MCF 10A (cell line): ENCODE measurements at regions of chr1 and their contacts with region 1.

Region 1: DNA sequence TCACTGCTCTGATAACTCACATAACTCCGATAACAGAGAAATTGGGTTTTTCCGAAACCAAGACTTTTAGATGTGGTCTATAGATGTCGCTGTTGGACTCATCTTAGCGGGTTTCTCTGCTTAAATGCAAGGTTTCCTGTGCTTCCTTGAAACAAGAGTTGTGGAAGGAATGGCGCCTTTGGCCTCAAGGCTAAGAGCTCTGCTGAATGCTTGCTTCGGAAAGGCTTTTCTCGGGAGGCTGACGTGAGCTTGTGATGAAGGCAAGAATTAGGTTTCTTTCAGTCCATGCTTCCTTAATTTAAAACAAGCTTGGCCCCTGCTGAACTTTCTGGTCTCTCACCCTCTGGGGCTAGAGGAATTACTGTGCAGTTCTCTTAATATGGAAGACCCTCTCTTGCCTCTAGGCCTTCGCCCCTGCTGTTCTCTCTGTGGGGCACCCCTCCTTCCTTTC is 113.5 kb downstream of the MAP3K21 start:
- DNase-seq: peak; percentile 90
- H3K4me3 Mint-ChIP-seq: no peak overlapping the region
- H3K27ac Mint-ChIP-seq: no peak overlapping the region
- H3K4me1 Mint-ChIP-seq: peaks cover 18% of the 10 kb centered on the region
- H3K27me3 Mint-ChIP-seq: no peaks in the 10 kb centered on the region
- CTCF ChIP-seq: peak; percentile 99

Region 2: DNA sequence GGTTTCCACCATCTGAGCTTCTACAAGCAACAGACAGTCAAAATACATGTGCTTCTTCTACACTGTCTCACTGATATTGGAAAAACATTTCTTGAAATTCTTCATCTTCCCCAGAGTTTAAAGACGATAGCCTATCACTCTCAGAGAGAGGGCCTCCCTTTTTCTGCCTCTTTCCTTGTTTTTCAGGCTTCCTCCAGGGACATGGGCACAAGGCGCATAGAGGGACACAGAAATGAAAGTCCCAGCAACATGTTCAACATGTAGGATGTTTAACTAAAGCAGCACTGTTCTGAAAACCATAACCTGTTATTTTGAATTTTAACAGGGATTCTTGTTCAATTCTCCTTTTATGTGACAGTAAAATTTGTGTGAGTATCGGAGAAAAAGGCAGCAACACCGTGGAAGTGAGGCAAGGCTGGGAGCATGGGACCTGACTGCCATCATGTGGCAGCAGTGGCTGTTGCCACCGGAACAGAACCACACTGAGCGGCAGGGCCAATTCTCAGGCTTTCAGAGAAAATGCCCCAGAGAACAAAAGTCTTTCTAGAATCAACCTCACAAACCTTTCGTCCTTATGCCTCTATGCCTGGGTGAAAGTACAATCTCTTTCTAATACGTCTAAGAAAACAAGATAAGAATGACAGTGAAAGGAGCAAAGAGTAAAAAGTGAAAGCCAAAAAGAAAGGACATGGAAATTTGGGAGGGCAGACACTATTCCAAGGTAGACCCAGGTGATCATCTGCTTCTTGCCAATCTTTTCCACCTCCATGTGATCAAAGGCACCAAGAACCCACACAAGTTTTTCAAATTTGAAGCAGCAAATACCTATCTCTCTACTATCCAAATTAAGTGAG is 199.9 kb before region 1 on chr1:
- CTCF ChIA-PET with region 1: no interaction called
- POLR2A ChIA-PET with region 1: no interaction called
- intact Hi-C with region 1: no loop called
- DNase-seq: peak; percentile 56
- H3K4me3 Mint-ChIP-seq: no peak overlapping the region
- H3K27ac Mint-ChIP-seq: peak overlapping the region; percentile 32
- H3K4me1 Mint-ChIP-seq: peaks cover 9% of the 10 kb centered on the region
- H3K27me3 Mint-ChIP-seq: no peaks in the 10 kb centered on the region
- CTCF ChIP-seq: peak; percentile 90

Region 3: DNA sequence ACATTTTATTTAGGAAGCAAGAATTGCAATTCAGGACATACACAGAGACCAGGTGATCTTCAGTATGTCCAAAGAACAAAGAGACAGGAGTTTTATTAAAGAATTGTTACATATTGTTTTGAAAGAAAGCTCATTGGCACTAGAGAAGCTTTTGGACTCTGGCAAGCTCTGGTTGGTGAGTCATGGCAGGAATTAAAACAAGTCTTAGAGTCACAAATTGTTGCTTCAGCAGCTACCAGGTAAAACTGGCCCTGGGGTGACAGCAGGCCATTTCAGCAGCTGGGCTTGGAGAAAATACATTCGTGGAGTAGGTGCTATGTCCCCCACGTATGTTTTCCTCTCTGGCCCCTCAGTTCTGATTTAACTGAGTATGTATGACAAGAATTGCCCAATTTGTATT is 54.6 kb before region 1 on chr1:
- CTCF ChIA-PET with region 1: interaction called, 74 read pairs
- POLR2A ChIA-PET with region 1: no interaction called
- intact Hi-C with region 1: no loop called
- DNase-seq: peak; percentile 91
- H3K4me3 Mint-ChIP-seq: no peak overlapping the region
- H3K27ac Mint-ChIP-seq: no peak overlapping the region
- H3K4me1 Mint-ChIP-seq: peaks cover 6% of the 10 kb centered on the region
- H3K27me3 Mint-ChIP-seq: no peaks in the 10 kb centered on the region
- CTCF ChIP-seq: no peak

Region 4: DNA sequence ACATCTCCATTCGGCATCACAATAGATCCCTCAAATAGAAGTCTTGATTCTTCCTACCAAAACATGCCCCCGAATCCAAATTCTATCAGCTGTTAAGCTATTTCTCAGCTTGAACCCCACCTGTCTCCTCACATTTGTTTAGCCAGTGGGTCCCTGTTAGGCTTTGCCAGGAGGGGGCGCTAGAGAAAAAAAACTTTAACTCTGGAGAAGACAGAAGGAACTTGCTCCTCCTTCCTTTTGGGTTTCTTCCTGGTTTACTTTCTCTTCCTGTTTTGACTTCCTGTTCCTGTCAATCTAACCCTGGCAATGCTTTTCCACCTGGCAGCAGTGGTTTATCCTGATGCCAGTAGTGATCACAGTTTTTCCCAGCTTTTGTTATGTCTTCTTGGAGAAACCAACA is 77.4 kb after region 1 on chr1:
- CTCF ChIA-PET with region 1: interaction called, 29 read pairs
- POLR2A ChIA-PET with region 1: no interaction called
- intact Hi-C with region 1: no loop called
- DNase-seq: peak; percentile 83
- H3K4me3 Mint-ChIP-seq: no peak overlapping the region
- H3K27ac Mint-ChIP-seq: no peak overlapping the region
- H3K4me1 Mint-ChIP-seq: peaks cover 14% of the 10 kb centered on the region
- H3K27me3 Mint-ChIP-seq: no peaks in the 10 kb centered on the region
- CTCF ChIP-seq: peak; percentile 83

Region 5: DNA sequence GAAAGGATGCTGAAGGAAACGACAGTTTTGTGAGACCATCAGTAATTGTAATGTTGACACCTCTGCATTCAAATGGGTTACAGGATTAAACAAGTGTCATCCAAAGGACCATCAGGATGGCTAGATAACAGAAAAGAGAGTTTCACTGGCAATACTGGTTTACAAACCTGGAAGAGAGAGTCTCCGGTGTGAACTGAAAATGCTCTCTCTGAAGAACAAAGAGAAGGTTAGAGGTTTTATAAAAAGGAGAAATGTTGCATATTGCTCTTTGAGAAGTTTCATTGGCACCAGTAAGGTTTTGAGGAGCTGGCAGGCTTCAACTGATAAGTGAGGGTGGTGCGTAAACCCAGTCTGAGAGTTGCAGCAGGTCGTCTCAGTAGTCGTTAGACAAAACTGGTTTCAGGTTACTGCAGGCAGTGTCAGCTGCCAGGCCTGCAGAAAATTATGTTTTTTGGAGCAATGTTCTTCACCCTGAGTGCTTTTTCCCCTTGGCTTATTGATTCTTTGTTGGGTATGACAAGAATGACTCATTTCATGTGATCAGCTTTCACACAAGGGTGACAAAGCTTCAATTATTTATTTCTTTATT is 215.2 kb after region 1 on chr1:
- CTCF ChIA-PET with region 1: interaction called, 30 read pairs
- POLR2A ChIA-PET with region 1: no interaction called
- intact Hi-C with region 1: no loop called
- DNase-seq: peak; percentile 17
- H3K4me3 Mint-ChIP-seq: no peak overlapping the region
- H3K27ac Mint-ChIP-seq: peak overlapping the region; percentile 4
- H3K4me1 Mint-ChIP-seq: peaks cover 54% of the 10 kb centered on the region
- H3K27me3 Mint-ChIP-seq: no peaks in the 10 kb centered on the region
- CTCF ChIP-seq: no peak

Region 6: GRCh38 chr1:233782937-233783586 is 342.1 kb after region 1 on chr1:
- CTCF ChIA-PET with region 1: interaction called, 230 read pairs
- POLR2A ChIA-PET with region 1: interaction called, 4 read pairs
- intact Hi-C with region 1: no loop called
- DNase-seq: no peak
- H3K4me3 Mint-ChIP-seq: no peak overlapping the region
- H3K27ac Mint-ChIP-seq: no peak overlapping the region
- H3K4me1 Mint-ChIP-seq: no peaks in the 10 kb centered on the region
- H3K27me3 Mint-ChIP-seq: no peaks in the 10 kb centered on the region
- CTCF ChIP-seq: no peak

Region 7: GRCh38 chr1:234065794-234066447 is 624.9 kb after region 1 on chr1:
- CTCF ChIA-PET with region 1: interaction called, 157 read pairs
- POLR2A ChIA-PET with region 1: interaction called, 3 read pairs
- intact Hi-C with region 1: loop called (anchors 1 kb)
- DNase-seq: peak; percentile 89
- H3K4me3 Mint-ChIP-seq: no peak overlapping the region
- H3K27ac Mint-ChIP-seq: no peak overlapping the region
- H3K4me1 Mint-ChIP-seq: peaks cover 5% of the 10 kb centered on the region
- H3K27me3 Mint-ChIP-seq: no peaks in the 10 kb centered on the region
- CTCF ChIP-seq: peak; percentile 98